ENCODE measurements at regions of chr9 and their contacts with region 1.

Region 1: GRCh38 chr9:105244003-105244733 is at the start of gene SLC44A1:
- DNase-seq: peak; percentile 92
- ATAC-seq: peak; percentile 84
- H3K4me3 ChIP-seq: peak within 1 kb of the TSS; percentile 38 to 85 (median 71)
- H3K4me3 Mint-ChIP-seq: peak within 1 kb of the TSS; percentile 95
- H3K27ac ChIP-seq: peak within 1 kb of the TSS; percentile 42 to 73
- H3K27ac Mint-ChIP-seq: peak within 1 kb of the TSS; percentile 89
- H3K4me1 ChIP-seq: peaks cover 11 to 15% of the 10 kb centered on the region in 2 donors
- H3K4me1 Mint-ChIP-seq: peaks cover 28% of the 10 kb centered on the region
- H3K27me3 ChIP-seq: no peaks in the 10 kb centered on the region
- H3K27me3 Mint-ChIP-seq: peaks cover 8% of the 10 kb centered on the region
- CTCF ChIP-seq: no peak
- total RNA-seq, gene SLC44A1: 16.2 and 17.7 TPM in 2 replicates

Region 2: DNA sequence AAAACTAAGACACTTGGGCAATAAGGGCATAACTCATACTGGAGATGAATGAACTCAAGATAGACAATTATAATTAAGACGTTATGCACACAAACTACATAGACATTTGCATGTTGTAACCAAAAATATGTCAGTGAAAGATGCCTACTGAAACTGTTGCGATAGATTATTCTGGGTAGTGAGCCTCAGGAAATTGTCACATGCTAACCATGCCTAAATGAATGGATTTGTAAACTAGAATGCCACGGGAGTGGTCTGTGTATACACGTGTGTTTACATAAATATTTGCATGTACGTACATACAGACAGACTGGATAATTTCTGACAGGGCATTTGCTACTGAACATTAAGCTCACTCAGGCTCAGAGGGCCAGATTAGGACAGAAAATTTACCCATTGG is 479.0 kb before region 1 on chr9:
- CTCF ChIA-PET with region 1: no interaction called
- POLR2A ChIA-PET with region 1: interaction called, 6 read pairs
- intact Hi-C with region 1: loop called (anchors 5 kb)
- DNase-seq: peak; percentile 50
- ATAC-seq: peak; percentile 3
- H3K4me3 ChIP-seq: peak overlapping the region in 3 of 5 experiments; percentile 77 to 91 (median 89)
- H3K4me3 Mint-ChIP-seq: peak overlapping the region; percentile 95
- H3K27ac ChIP-seq: peak overlapping the region; percentile 3 to 89
- H3K27ac Mint-ChIP-seq: peak overlapping the region; percentile 96
- H3K4me1 ChIP-seq: peaks cover 16 to 23% of the 10 kb centered on the region in 2 donors
- H3K4me1 Mint-ChIP-seq: peaks cover 30% of the 10 kb centered on the region
- H3K27me3 ChIP-seq: no peaks in the 10 kb centered on the region
- H3K27me3 Mint-ChIP-seq: no peaks in the 10 kb centered on the region
- CTCF ChIP-seq: no peak

Region 3: GRCh38 chr9:104927912-104928740 is 316.0 kb before region 1 on chr9 and contains the start of gene ABCA1:
- CTCF ChIA-PET with region 1: interaction called, 7 read pairs
- POLR2A ChIA-PET with region 1: interaction called, 4 read pairs
- intact Hi-C with region 1: loop called (anchors 1 kb)
- DNase-seq: peak; percentile 92
- ATAC-seq: peak; percentile 62
- H3K4me3 ChIP-seq: peak within 1 kb of the TSS; percentile 73 to 96 (median 94)
- H3K4me3 Mint-ChIP-seq: peak within 1 kb of the TSS; percentile 98
- H3K27ac ChIP-seq: peak within 1 kb of the TSS; percentile 69 to 72
- H3K27ac Mint-ChIP-seq: peak within 1 kb of the TSS; percentile 88
- H3K4me1 ChIP-seq: peaks cover 31 to 41% of the 10 kb centered on the region in 2 donors
- H3K4me1 Mint-ChIP-seq: peaks cover 42% of the 10 kb centered on the region
- H3K27me3 ChIP-seq: no peaks in the 10 kb centered on the region
- H3K27me3 Mint-ChIP-seq: no peaks in the 10 kb centered on the region
- CTCF ChIP-seq: no peak
- total RNA-seq, gene ABCA1: 22.8 and 24.0 TPM in 2 replicates

Region 4: GRCh38 chr9:105141146-105141975 is 102.8 kb before region 1 on chr9:
- CTCF ChIA-PET with region 1: no interaction called
- POLR2A ChIA-PET with region 1: no interaction called
- intact Hi-C with region 1: no loop called
- DNase-seq: no peak
- ATAC-seq: no peak
- H3K4me3 ChIP-seq: no peak overlapping the region
- H3K4me3 Mint-ChIP-seq: no peak overlapping the region
- H3K27ac ChIP-seq: no peak overlapping the region
- H3K27ac Mint-ChIP-seq: no peak overlapping the region
- H3K4me1 ChIP-seq: peaks cover 0 to 6% of the 10 kb centered on the region in 2 donors
- H3K4me1 Mint-ChIP-seq: peaks cover 5% of the 10 kb centered on the region
- H3K27me3 ChIP-seq: no peaks in the 10 kb centered on the region
- H3K27me3 Mint-ChIP-seq: peaks cover 15% of the 10 kb centered on the region
- CTCF ChIP-seq: no peak

Region 5: GRCh38 chr9:105157130-105157583 is 87.0 kb before region 1 on chr9:
- CTCF ChIA-PET with region 1: no interaction called
- POLR2A ChIA-PET with region 1: no interaction called
- intact Hi-C with region 1: no loop called
- DNase-seq: peak; percentile 59
- ATAC-seq: peak; percentile 63
- H3K4me3 ChIP-seq: no peak overlapping the region
- H3K4me3 Mint-ChIP-seq: no peak overlapping the region
- H3K27ac ChIP-seq: no peak overlapping the region
- H3K27ac Mint-ChIP-seq: no peak overlapping the region
- H3K4me1 ChIP-seq: no peaks in the 10 kb centered on the region
- H3K4me1 Mint-ChIP-seq: peaks cover 3% of the 10 kb centered on the region
- H3K27me3 ChIP-seq: no peaks in the 10 kb centered on the region
- H3K27me3 Mint-ChIP-seq: no peaks in the 10 kb centered on the region
- CTCF ChIP-seq: peak; percentile 56

Region 6: DNA sequence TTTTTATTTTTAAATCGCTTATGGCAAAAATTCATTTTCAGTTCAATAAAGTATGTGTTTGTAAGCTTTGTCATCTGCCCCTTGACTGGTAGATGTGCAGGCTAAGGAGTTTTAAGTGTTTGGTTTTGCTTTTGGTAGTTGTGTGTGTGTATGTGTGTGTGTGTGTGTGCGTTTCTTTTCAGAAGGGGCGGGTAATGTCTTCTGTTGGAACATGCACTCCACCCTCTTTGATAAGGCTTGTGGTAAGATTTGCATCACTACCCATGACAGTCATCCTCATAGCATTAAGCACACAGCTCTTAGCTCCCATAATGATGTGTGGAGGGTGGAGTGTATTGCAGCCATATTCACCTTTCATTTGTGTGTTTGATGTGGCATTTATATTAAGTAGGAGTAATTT is 111.6 kb after region 1 on chr9:
- CTCF ChIA-PET with region 1: no interaction called
- POLR2A ChIA-PET with region 1: no interaction called
- intact Hi-C with region 1: loop called (anchors 10 kb)
- DNase-seq: peak; percentile 63
- ATAC-seq: peak; percentile 94
- H3K4me3 ChIP-seq: no peak overlapping the region
- H3K4me3 Mint-ChIP-seq: no peak overlapping the region
- H3K27ac ChIP-seq: no peak overlapping the region
- H3K27ac Mint-ChIP-seq: no peak overlapping the region
- H3K4me1 ChIP-seq: peaks cover 4 to 6% of the 10 kb centered on the region in 2 donors
- H3K4me1 Mint-ChIP-seq: peaks cover 11% of the 10 kb centered on the region
- H3K27me3 ChIP-seq: no peaks in the 10 kb centered on the region
- H3K27me3 Mint-ChIP-seq: no peaks in the 10 kb centered on the region
- CTCF ChIP-seq: no peak

Region 7: DNA sequence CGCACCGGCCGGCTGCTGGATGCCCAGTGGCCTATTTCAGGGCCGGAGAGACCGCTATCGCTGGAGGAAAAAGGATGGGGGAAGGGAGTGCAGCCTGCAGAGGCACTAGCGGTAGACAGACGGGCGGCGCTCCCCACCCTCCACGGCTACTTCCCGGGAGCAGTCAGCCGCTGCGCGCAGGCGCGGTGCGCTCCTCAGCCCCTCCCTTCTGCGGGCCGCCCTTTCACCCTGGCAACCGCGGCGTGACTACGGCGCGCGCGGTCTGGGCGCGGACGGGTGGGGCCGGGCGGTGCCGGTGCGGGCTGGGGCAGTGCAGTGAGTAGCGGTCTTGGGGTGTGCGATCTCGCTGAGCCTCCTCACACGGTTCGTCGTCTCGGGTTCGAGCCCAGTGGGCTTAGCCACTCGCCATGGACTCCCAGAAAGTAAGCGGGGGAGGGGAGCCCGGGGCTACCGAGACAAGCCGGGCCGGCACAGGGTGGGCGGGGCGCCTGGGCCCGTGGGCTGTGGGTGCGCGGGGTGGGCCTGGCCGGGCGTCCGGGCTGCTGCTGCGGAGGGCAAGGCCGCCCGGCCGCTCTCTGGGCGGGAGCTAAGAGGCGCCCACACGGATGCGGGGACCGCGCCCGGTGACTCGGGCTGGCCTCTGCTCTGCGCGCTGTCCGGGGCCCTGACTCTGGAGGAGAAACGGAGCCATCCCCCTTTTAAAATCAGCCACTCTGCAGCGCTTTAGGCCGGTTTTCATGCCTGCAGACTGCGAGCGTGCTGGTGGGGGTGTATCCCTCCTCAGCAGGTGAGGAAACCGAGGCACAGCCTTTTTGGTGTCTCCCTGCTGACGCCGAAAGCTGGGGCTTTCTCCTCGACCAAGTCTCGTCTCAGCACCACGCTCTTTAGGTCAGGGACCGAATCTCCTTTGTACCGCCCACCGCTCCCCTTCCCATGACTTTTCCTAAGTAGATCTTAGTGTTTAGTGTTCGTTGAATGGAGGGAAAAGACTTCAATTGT is 203.9 kb after region 1 on chr9 and contains the start of gene FSD1L:
- CTCF ChIA-PET with region 1: no interaction called
- POLR2A ChIA-PET with region 1: no interaction called
- intact Hi-C with region 1: loop called (anchors 2 kb)
- DNase-seq: peak; percentile 90
- ATAC-seq: peak; percentile 91
- H3K4me3 ChIP-seq: peak within 1 kb of the TSS in 4 of 5 experiments; percentile 69 to 83 (median 74)
- H3K4me3 Mint-ChIP-seq: peak within 1 kb of the TSS; percentile 90
- H3K27ac ChIP-seq: peak within 1 kb of the TSS; percentile 21 to 24
- H3K27ac Mint-ChIP-seq: peak within 1 kb of the TSS; percentile 89
- H3K4me1 ChIP-seq: peaks cover 9 to 11% of the 10 kb centered on the region in 2 donors
- H3K4me1 Mint-ChIP-seq: peaks cover 17% of the 10 kb centered on the region
- H3K27me3 ChIP-seq: no peaks in the 10 kb centered on the region
- H3K27me3 Mint-ChIP-seq: no peaks in the 10 kb centered on the region
- CTCF ChIP-seq: no peak
- total RNA-seq, gene FSD1L: 9.8 and 15.2 TPM in 2 replicates

Region 8: GRCh38 chr9:105572455-105572854 is 328.3 kb after region 1 on chr9:
- CTCF ChIA-PET with region 1: no interaction called
- POLR2A ChIA-PET with region 1: no interaction called
- intact Hi-C with region 1: no loop called
- DNase-seq: no peak
- ATAC-seq: no peak
- H3K4me3 ChIP-seq: no peak overlapping the region
- H3K4me3 Mint-ChIP-seq: no peak overlapping the region
- H3K27ac ChIP-seq: no peak overlapping the region
- H3K27ac Mint-ChIP-seq: no peak overlapping the region
- H3K4me1 ChIP-seq: no peaks in the 10 kb centered on the region
- H3K4me1 Mint-ChIP-seq: no peaks in the 10 kb centered on the region
- H3K27me3 ChIP-seq: no peaks in the 10 kb centered on the region
- H3K27me3 Mint-ChIP-seq: no peaks in the 10 kb centered on the region
- CTCF ChIP-seq: no peak